Right lobe of liver (tissue), 6 donors: ENCODE measurements at regions of chr4 and their contacts with region 1.

Region 1: DNA sequence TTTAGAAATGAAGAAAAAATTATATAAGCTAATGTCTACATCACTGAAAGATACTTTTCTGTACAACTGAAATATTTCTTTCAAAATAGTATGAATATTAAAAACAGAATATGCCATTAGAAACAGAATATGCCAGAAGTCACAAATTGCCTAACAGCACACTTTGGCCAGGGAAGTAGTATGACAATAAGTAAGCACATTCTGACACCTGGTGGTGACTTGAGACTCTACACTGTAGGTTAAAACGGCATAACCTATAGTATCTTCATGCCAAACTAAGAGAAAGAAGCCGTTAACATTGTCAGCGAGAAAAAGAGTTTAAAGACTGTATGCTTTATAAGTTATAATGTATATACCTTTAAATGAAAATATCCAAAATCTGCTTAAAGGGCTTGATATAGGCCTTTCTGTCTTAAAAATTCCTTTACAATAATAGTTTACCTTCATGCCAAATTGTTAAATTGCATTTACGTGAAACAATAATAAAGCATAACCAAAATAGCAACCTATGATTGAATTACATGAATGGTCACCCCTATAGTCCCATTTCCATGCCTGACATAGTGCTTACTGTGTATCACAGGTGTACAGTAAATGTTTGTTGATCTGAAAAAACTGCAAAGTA is 32.8 kb downstream of the FAM13A start:
- DNase-seq: peak in 1 of 3 donors; percentile 69
- ATAC-seq: peak; percentile 100
- H3K4me3 ChIP-seq: no peak overlapping the region
- H3K27ac ChIP-seq: no peak overlapping the region
- H3K4me1 ChIP-seq: no peaks in the 10 kb centered on the region
- H3K27me3 ChIP-seq: no peaks in the 10 kb centered on the region
- CTCF ChIP-seq: peak; percentile 82 to 96 (median 86)
- POLR2A ChIP-seq: no peak

Region 2: GRCh38 chr4:88706574-88706973 is 317.6 kb before region 1 on chr4:
- intact Hi-C with region 1: loop called in 1 of 2 experiments (anchors 10 kb)
- DNase-seq: peak in 1 of 3 donors; percentile 57
- ATAC-seq: peak; percentile 97 to 99 (median 98)
- H3K4me3 ChIP-seq: no peak overlapping the region
- H3K27ac ChIP-seq: peak overlapping the region in 1 of 3 donors; percentile 20
- H3K4me1 ChIP-seq: peaks cover 0 to 13% (median 0%) of the 10 kb centered on the region in 4 donors
- H3K27me3 ChIP-seq: no peaks in the 10 kb centered on the region
- CTCF ChIP-seq: peak; percentile 67 to 79 (median 72)
- POLR2A ChIP-seq: no peak

Region 3: GRCh38 chr4:88818631-88819470 is 205.3 kb before region 1 on chr4:
- intact Hi-C with region 1: loop called in 1 of 2 experiments (anchors 10 kb)
- DNase-seq: peak; percentile 30 to 66 (median 58)
- ATAC-seq: peak; percentile 48 to 77 (median 64)
- H3K4me3 ChIP-seq: no peak overlapping the region
- H3K27ac ChIP-seq: no peak overlapping the region
- H3K4me1 ChIP-seq: peaks cover 0 to 51% (median 4%) of the 10 kb centered on the region in 4 donors
- H3K27me3 ChIP-seq: no peaks in the 10 kb centered on the region
- CTCF ChIP-seq: peak; percentile 55 to 74 (median 67)
- POLR2A ChIP-seq: no peak